CD8-positive, alpha-beta T cell (primary cell): ENCODE measurements at regions of chr10 and their contacts with region 1.

Region 1: GRCh38 chr10:128211953-128212727 is 85.9 kb upstream of the MKI67 start:
- DNase-seq: peak; percentile 68 to 90 (median 81)
- ATAC-seq: peak; percentile 77
- H3K4me3 ChIP-seq: peak overlapping the region; percentile 39 to 43
- H3K4me3 Mint-ChIP-seq: peak overlapping the region; percentile 83
- H3K27ac ChIP-seq: no peak overlapping the region
- H3K27ac Mint-ChIP-seq: peak overlapping the region; percentile 66
- H3K4me1 ChIP-seq: peaks cover 8% of the 10 kb centered on the region
- H3K4me1 Mint-ChIP-seq: peaks cover 16% of the 10 kb centered on the region
- H3K27me3 ChIP-seq: no peaks in the 10 kb centered on the region
- H3K27me3 Mint-ChIP-seq: no peaks in the 10 kb centered on the region
- CTCF ChIP-seq: peak; percentile 95

Region 2: DNA sequence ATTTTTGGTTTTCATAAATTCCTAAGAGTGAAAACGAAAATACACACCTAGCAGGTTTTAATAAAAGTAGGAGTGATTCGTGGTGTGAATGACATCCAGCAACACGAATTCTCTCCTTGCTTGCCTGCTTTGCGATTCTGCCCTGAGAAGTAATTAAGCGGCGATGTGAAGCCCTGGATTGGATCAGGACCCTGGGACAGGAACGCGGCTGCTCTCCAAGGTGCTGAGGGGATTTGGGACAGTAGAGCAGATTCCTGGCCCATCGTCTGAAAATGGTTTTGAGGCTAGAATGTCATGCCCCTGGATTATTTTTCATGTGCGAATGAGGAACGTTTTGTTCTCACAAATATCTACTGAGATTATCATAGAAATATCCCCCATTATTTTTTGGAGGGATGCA is 655.2 kb before region 1 on chr10:
- CTCF ChIA-PET with region 1: no interaction called
- POLR2A ChIA-PET with region 1: no interaction called
- intact Hi-C with region 1: no loop called
- DNase-seq: no peak
- ATAC-seq: no peak
- H3K4me3 ChIP-seq: no peak overlapping the region
- H3K4me3 Mint-ChIP-seq: no peak overlapping the region
- H3K27ac ChIP-seq: no peak overlapping the region
- H3K27ac Mint-ChIP-seq: no peak overlapping the region
- H3K4me1 ChIP-seq: no peaks in the 10 kb centered on the region
- H3K4me1 Mint-ChIP-seq: no peaks in the 10 kb centered on the region
- H3K27me3 ChIP-seq: no peaks in the 10 kb centered on the region
- H3K27me3 Mint-ChIP-seq: peaks cover 10% of the 10 kb centered on the region
- CTCF ChIP-seq: no peak

Region 3: DNA sequence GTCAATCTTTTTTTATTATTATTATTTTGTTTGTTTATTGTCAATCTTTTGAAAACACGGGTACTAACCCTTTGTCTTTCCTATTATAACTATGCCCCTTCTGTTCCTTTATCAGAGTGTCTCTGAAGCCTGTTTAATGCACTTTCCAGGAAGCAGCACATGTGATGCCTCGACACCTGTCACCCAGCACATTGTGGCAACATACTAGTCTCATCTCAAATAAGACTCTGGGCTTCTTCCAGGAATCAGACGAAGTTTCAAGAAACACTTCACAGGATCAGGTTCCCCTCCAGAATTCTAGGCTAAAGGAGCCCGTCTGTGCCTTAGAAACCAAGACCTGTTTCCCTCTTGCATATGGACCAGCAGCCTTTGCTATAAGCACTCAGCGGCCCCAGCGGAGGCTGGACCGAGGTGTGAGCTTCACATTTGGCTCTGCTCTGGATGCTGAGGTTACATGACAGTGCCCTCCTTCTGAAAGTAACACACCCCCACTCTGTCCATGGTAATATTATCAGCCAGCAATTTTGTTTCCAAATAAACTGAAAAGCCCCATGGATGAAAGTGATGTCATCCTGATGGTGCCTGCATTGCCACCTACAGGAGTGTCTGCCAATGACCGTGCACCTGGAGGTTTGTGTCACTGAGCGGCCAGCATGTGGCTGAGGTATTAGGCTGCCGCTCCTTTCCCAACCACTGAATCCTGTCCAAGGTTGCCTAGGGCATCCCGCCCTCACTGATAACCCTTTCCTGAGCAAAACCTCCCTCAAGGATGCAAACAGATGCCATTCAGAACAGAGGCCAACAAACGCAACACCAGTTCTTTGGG is 124.0 kb before region 1 on chr10:
- CTCF ChIA-PET with region 1: no interaction called
- POLR2A ChIA-PET with region 1: no interaction called
- intact Hi-C with region 1: no loop called
- DNase-seq: no peak
- ATAC-seq: no peak
- H3K4me3 ChIP-seq: no peak overlapping the region
- H3K4me3 Mint-ChIP-seq: no peak overlapping the region
- H3K27ac ChIP-seq: no peak overlapping the region
- H3K27ac Mint-ChIP-seq: no peak overlapping the region
- H3K4me1 ChIP-seq: no peaks in the 10 kb centered on the region
- H3K4me1 Mint-ChIP-seq: peaks cover 1% of the 10 kb centered on the region
- H3K27me3 ChIP-seq: no peaks in the 10 kb centered on the region
- H3K27me3 Mint-ChIP-seq: no peaks in the 10 kb centered on the region
- CTCF ChIP-seq: no peak

Region 4: DNA sequence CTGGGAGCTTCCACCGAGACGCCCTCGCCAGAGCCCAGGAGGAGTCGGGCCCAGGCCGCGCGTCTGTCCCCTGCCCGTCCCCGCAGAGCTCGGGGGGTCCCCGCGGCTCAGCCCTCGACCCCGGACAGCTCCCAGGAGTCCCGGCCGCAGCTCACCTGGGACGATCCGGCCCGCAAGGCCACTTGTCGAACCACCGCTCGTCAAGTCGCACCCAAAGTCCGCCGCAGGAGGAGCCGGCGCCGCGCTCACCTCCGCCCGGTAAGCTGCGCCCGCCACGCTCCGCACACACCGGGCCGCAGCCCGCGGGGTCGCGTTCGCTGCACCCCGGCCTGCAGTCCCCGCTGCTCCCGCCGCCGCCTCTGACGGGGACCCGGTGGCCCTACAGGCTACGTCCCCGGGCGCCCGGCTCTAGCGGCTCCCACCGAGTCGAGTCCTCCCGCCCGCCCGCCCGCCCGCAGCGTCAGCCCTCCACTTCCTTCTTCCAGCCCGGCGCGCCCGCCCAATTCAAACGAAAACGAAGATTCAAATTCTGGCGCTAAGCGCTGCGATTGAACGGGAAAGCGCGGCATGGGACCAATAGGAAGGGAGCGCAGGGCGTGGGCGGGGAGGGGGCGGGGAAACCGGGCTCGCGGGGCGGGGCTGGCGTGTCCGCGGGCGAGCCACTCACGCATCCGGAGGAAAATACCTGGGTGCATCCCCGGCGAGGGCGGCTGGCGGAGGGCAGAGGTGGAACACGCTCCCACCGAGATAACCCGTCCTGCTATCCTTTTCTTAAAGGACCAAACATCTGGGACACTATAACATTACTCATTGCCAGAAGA is 86.0 kb before region 1 on chr10 and contains the start of gene MKI67:
- CTCF ChIA-PET with region 1: interaction called, 3 read pairs
- POLR2A ChIA-PET with region 1: no interaction called
- intact Hi-C with region 1: loop called (anchors 1 to 5 kb)
- DNase-seq: peak; percentile 74 to 95 (median 89)
- ATAC-seq: peak; percentile 94
- H3K4me3 ChIP-seq: peak within 1 kb of the TSS; percentile 75 to 84
- H3K4me3 Mint-ChIP-seq: peak within 1 kb of the TSS; percentile 87
- H3K27ac ChIP-seq: peak within 1 kb of the TSS; percentile 29 to 36
- H3K27ac Mint-ChIP-seq: no peak within 1 kb of the TSS
- H3K4me1 ChIP-seq: peaks cover 17% of the 10 kb centered on the region
- H3K4me1 Mint-ChIP-seq: peaks cover 26% of the 10 kb centered on the region
- H3K27me3 ChIP-seq: peaks cover 11 to 14% of the 10 kb centered on the region in 2 experiments
- H3K27me3 Mint-ChIP-seq: peaks cover 30% of the 10 kb centered on the region
- CTCF ChIP-seq: no peak
- total RNA-seq, gene MKI67: 1.5 to 1.9 TPM

Region 5: GRCh38 chr10:128178319-128178958 is 33.7 kb before region 1 on chr10:
- CTCF ChIA-PET with region 1: interaction called, 49 read pairs
- POLR2A ChIA-PET with region 1: interaction called, 3 read pairs
- intact Hi-C with region 1: loop called in 1 of 2 experiments (anchors 1 kb)
- DNase-seq: peak in 8 of 9 experiments; percentile 24 to 66 (median 48)
- ATAC-seq: peak; percentile 54
- H3K4me3 ChIP-seq: no peak overlapping the region
- H3K4me3 Mint-ChIP-seq: no peak overlapping the region
- H3K27ac ChIP-seq: no peak overlapping the region
- H3K27ac Mint-ChIP-seq: no peak overlapping the region
- H3K4me1 ChIP-seq: peaks cover 13% of the 10 kb centered on the region
- H3K4me1 Mint-ChIP-seq: peaks cover 23% of the 10 kb centered on the region
- H3K27me3 ChIP-seq: no peaks in the 10 kb centered on the region
- H3K27me3 Mint-ChIP-seq: no peaks in the 10 kb centered on the region
- CTCF ChIP-seq: peak; percentile 44

Region 6: DNA sequence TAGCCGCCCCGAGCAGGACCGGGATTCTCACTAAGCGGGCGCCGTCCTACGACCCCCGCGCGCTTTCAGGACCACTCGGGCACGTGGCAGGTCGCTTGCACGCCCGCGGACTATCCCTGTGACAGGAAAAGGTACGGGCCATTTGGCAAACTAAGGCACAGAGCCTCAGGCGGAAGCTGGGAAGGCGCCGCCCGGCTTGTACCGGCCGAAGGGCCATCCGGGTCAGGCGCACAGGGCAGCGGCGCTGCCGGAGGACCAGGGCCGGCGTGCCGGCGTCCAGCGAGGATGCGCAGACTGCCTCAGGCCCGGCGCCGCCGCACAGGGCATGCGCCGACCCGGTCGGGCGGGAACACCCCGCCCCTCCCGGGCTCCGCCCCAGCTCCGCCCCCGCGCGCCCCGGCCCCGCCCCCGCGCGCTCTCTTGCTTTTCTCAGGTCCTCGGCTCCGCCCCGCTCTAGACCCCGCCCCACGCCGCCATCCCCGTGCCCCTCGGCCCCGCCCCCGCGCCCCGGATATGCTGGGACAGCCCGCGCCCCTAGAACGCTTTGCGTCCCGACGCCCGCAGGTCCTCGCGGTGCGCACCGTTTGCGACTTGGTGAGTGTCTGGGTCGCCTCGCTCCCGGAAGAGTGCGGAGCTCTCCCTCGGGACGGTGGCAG is 1254.7 kb after region 1 on chr10 and contains the start of gene MGMT:
- CTCF ChIA-PET with region 1: no interaction called
- POLR2A ChIA-PET with region 1: no interaction called
- intact Hi-C with region 1: loop called (anchors 5 kb)
- DNase-seq: peak; percentile 96 to 99 (median 98)
- ATAC-seq: peak; percentile 98
- H3K4me3 ChIP-seq: peak within 1 kb of the TSS; percentile 83 to 89
- H3K4me3 Mint-ChIP-seq: peak within 1 kb of the TSS; percentile 85
- H3K27ac ChIP-seq: peak within 1 kb of the TSS; percentile 63 to 78
- H3K27ac Mint-ChIP-seq: peak within 1 kb of the TSS; percentile 86
- H3K4me1 ChIP-seq: peaks cover 17% of the 10 kb centered on the region
- H3K4me1 Mint-ChIP-seq: peaks cover 27% of the 10 kb centered on the region
- H3K27me3 ChIP-seq: no peaks in the 10 kb centered on the region
- H3K27me3 Mint-ChIP-seq: no peaks in the 10 kb centered on the region
- CTCF ChIP-seq: no peak
- total RNA-seq, gene MGMT: 6.4 to 7.0 TPM

Region 7: DNA sequence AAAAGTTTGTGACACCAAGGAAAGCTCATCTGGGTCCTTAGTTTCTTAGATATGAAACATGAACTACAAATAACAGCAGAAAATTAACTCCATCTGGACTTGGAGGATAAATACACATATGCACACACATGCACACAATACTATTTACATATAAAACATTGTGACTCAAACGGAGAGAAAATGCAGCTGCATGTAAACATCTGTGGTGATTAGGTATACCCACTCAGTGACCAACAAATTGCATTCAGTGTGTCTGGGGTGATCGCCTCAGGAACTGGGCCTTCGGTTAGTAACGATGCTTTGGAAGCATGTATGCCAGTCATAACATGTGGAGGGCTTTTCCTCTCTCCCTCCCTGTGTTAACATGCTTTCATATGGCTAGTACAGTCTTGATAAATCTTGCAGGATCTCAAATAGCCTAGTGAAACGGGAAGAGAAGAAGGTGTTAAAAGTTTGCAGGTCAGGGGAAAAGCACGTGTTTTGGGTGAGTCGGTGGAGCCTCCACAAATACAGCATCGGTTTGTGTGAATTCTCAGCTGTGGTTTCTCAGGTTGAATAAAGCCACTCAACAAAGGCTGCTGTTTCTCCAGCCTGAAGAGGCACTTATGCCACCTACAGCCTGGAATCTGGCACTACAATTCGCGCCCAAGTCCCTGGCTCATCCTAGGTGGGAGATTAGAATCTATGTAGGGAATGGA is 1915.4 kb after region 1 on chr10:
- CTCF ChIA-PET with region 1: interaction called, 3 read pairs
- POLR2A ChIA-PET with region 1: no interaction called
- intact Hi-C with region 1: loop called in 1 of 2 experiments (anchors 5 kb)
- DNase-seq: peak; percentile 16 to 80 (median 50)
- ATAC-seq: peak; percentile 95
- H3K4me3 ChIP-seq: no peak overlapping the region
- H3K4me3 Mint-ChIP-seq: no peak overlapping the region
- H3K27ac ChIP-seq: no peak overlapping the region
- H3K27ac Mint-ChIP-seq: no peak overlapping the region
- H3K4me1 ChIP-seq: peaks cover 4% of the 10 kb centered on the region
- H3K4me1 Mint-ChIP-seq: peaks cover 7% of the 10 kb centered on the region
- H3K27me3 ChIP-seq: no peaks in the 10 kb centered on the region
- H3K27me3 Mint-ChIP-seq: peaks cover 26% of the 10 kb centered on the region
- CTCF ChIP-seq: peak; percentile 75

Region 8: GRCh38 chr10:130179640-130180039 is 1967.5 kb after region 1 on chr10:
- CTCF ChIA-PET with region 1: no interaction called
- POLR2A ChIA-PET with region 1: no interaction called
- intact Hi-C with region 1: loop called in 1 of 2 experiments (anchors 5 kb)
- DNase-seq: peak in 7 of 9 experiments; percentile 23 to 63 (median 37)
- ATAC-seq: peak; percentile 85
- H3K4me3 ChIP-seq: no peak overlapping the region
- H3K4me3 Mint-ChIP-seq: no peak overlapping the region
- H3K27ac ChIP-seq: no peak overlapping the region
- H3K27ac Mint-ChIP-seq: peak overlapping the region; percentile 41
- H3K4me1 ChIP-seq: no peaks in the 10 kb centered on the region
- H3K4me1 Mint-ChIP-seq: peaks cover 6% of the 10 kb centered on the region
- H3K27me3 ChIP-seq: no peaks in the 10 kb centered on the region
- H3K27me3 Mint-ChIP-seq: no peaks in the 10 kb centered on the region
- CTCF ChIP-seq: peak; percentile 42